Right cardiac atrium (tissue), 5 donors: ENCODE measurements at regions of chr6 and their contacts with region 1.

Region 1: GRCh38 chr6:43951063-43951755 is 176.0 kb downstream of the MRPL14 start:
- DNase-seq: peak; percentile 57 to 86 (median 83)
- ATAC-seq: peak; percentile 61 to 66
- H3K4me3 ChIP-seq: no peak overlapping the region
- H3K27ac ChIP-seq: peak overlapping the region; percentile 1
- H3K4me1 ChIP-seq: peaks cover 2% of the 10 kb centered on the region
- H3K27me3 ChIP-seq: no peaks in the 10 kb centered on the region

Region 2: DNA sequence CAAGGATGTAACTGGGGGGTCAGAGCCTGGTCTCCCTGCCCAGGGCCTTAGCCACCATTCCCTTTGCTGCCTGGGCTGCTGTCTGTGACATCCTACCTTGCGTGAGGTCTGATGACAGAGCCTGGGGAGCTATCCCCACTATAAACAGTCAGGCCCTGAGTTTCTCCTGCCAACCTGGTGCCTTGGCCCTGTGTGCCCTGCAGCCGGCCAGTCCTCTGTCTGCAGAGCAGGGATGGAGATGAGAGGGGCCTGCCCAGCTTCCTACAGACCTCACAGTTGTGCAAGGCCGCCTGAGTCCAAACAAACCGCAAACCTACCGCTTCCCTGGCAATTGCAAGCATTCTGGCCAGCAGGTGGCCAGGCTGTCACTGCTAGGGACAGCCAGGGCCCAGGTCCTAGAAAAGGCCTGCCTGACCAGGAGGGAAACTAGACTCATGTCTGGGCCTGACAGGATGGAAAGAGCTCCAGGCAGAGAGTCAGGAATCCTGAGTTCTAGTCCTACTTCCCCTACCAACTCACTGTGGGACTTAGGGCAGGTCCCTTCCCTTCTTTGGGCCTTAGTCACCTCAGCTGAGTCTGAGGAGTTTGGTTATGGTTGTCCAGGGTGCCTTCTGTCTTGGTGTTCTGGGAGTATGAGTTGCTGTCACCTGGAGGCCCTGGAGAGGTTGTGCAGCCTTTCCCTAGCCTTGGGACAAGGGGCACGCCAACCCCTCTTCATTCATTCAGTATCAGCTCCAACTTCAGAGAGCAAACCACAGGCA is 95.0 kb before region 1 on chr6:
- intact Hi-C with region 1: loop called in 1 of 4 experiments (anchors 5 kb)
- DNase-seq: peak in 1 of 3 donors; percentile 70
- ATAC-seq: peak; percentile 40 to 47
- H3K4me3 ChIP-seq: no peak overlapping the region
- H3K27ac ChIP-seq: no peak overlapping the region
- H3K4me1 ChIP-seq: no peaks in the 10 kb centered on the region
- H3K27me3 ChIP-seq: no peaks in the 10 kb centered on the region

Region 3: GRCh38 chr6:43993881-43994523 is 42.8 kb after region 1 on chr6:
- intact Hi-C with region 1: loop called in 1 of 4 experiments (anchors 2 kb)
- DNase-seq: no peak
- ATAC-seq: no peak
- H3K4me3 ChIP-seq: no peak overlapping the region
- H3K27ac ChIP-seq: peak overlapping the region; percentile 94
- H3K4me1 ChIP-seq: peaks cover 13% of the 10 kb centered on the region
- H3K27me3 ChIP-seq: no peaks in the 10 kb centered on the region

Region 4: DNA sequence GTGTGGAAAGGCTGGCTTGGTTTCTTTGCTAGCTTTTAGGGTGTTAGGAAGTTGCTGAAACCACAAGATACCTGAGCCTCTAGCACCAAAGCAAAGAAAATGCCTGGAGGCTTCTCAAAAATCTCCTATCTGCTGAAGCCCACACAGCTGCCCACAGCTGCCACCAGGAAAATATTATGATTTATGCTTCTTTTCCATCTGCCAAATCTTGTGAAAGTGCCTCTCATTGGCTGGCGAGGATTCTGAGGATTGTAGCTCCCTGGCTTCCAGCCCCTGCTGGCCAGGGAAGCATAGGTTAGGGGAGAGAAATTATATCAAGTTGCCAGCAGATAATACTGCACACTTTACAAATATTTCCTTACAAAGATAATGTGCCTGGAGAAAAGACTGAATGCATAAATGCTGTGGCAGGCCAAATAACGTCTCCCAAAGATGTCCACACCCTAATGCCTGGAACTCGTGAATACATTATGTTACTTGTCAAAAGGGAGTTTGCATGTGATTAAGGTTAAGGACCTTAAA is 77.6 kb after region 1 on chr6:
- intact Hi-C with region 1: no loop called
- DNase-seq: peak in 2 of 3 donors; percentile 32 to 72
- ATAC-seq: no peak
- H3K4me3 ChIP-seq: no peak overlapping the region
- H3K27ac ChIP-seq: no peak overlapping the region
- H3K4me1 ChIP-seq: no peaks in the 10 kb centered on the region
- H3K27me3 ChIP-seq: no peaks in the 10 kb centered on the region